ENCODE measurements at regions of chr2 and their contacts with region 1.

Region 1: GRCh38 chr2:25514043-25514637 is 159.2 kb downstream of the DTNB start:
- DNase-seq: no peak
- ATAC-seq: no peak
- H3K4me3 ChIP-seq: no peak overlapping the region
- H3K4me3 Mint-ChIP-seq: peak overlapping the region in 1 of 10 donors; percentile 47
- H3K27ac ChIP-seq: no peak overlapping the region
- H3K27ac Mint-ChIP-seq: peak overlapping the region in 5 of 9 donors; percentile 1 to 78 (median 72)
- H3K4me1 ChIP-seq: no peaks in the 10 kb centered on the region
- H3K4me1 Mint-ChIP-seq: peaks cover 0 to 32% (median 6%) of the 10 kb centered on the region in 7 donors
- H3K27me3 ChIP-seq: no peaks in the 10 kb centered on the region
- H3K27me3 Mint-ChIP-seq: no peaks in the 10 kb centered on the region

Region 2: GRCh38 chr2:25453199-25453905 is 60.8 kb before region 1 on chr2:
- CTCF ChIA-PET with region 1: no interaction called
- POLR2A ChIA-PET with region 1: no interaction called
- intact Hi-C with region 1: loop called in 1 of 2 experiments (anchors 5 kb)
- DNase-seq: peak in 1 of 9 donors; percentile 33
- ATAC-seq: no peak
- H3K4me3 ChIP-seq: no peak overlapping the region
- H3K4me3 Mint-ChIP-seq: peak overlapping the region in 1 of 10 donors; percentile 81
- H3K27ac ChIP-seq: no peak overlapping the region
- H3K27ac Mint-ChIP-seq: peak overlapping the region in 2 of 9 donors; percentile 30 to 96
- H3K4me1 ChIP-seq: no peaks in the 10 kb centered on the region
- H3K4me1 Mint-ChIP-seq: peaks cover 0 to 38% (median 0%) of the 10 kb centered on the region in 7 donors
- H3K27me3 ChIP-seq: no peaks in the 10 kb centered on the region
- H3K27me3 Mint-ChIP-seq: no peaks in the 10 kb centered on the region

Region 3: DNA sequence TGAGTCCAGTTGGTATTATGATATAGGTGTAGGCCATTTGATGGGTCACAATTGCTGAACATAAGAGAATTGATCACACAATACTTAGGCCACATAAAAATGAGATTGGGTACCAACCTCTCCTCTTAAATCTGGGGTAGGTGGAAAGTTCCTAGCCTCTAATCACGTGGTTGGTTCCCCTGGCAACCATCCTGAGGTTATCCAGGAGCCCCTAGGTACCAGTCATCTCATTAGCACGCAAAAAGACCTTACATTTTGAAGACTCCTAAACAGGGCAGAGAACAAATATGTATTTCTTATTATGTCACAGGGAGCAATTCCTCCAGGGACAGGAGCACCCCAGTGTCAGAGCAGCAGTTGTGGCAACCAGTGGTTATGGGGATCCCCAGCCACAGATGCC is 819.2 kb after region 1 on chr2:
- CTCF ChIA-PET with region 1: no interaction called
- POLR2A ChIA-PET with region 1: no interaction called
- intact Hi-C with region 1: no loop called
- DNase-seq: no peak
- ATAC-seq: no peak
- H3K4me3 ChIP-seq: no peak overlapping the region
- H3K4me3 Mint-ChIP-seq: no peak overlapping the region
- H3K27ac ChIP-seq: no peak overlapping the region
- H3K27ac Mint-ChIP-seq: peak overlapping the region in 2 of 9 donors; percentile 15 to 41
- H3K4me1 ChIP-seq: peaks cover 0 to 6% of the 10 kb centered on the region in 2 donors
- H3K4me1 Mint-ChIP-seq: peaks cover 3 to 14% (median 11%) of the 10 kb centered on the region in 7 donors
- H3K27me3 ChIP-seq: no peaks in the 10 kb centered on the region
- H3K27me3 Mint-ChIP-seq: peaks cover 0 to 4% (median 0%) of the 10 kb centered on the region in 5 donors

Measured in naive thymus-derived CD4-positive, alpha-beta T cell (primary cell).